Right ventricle myocardium superior (tissue), 1 donor: ENCODE measurements at regions of chr12 and their contacts with region 1.

Region 1: DNA sequence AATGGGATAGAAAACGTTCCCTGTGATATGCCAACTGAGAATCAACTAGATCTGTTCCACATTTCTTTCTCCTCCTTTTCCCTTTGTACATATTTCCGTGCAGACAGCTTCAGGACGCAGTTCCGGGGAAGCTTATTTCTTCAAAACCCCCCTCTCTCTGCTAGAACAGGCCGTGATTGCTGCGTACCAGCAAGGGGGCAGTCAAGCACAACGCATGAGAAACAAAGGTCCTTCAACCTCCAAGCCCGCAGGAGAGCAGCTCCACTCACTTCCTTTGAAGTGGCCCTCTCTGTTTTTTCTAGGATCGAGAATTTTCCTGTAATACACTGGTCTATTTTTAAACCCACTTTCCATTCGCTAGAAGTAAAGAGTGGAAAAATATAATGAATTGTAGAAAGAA is 80.8 kb downstream of the ZNF664 start:
- DNase-seq: no peak
- ATAC-seq: peak; percentile 94

Region 2: GRCh38 chr12:124321040-124321481 is 267.2 kb after region 1 on chr12:
- intact Hi-C with region 1: loop called (anchors 5 kb)
- DNase-seq: peak; percentile 79
- ATAC-seq: peak; percentile 84